Uterus (tissue), 4 donors: ENCODE measurements at regions of chr10 and their contacts with region 1.

Region 1: GRCh38 chr10:116688241-116688711 is 54.1 kb downstream of the HSPA12A start:
- DNase-seq: peak; percentile 42 to 46
- H3K4me3 ChIP-seq: no peak overlapping the region
- H3K27ac ChIP-seq: peak overlapping the region; percentile 51 to 58
- H3K4me1 ChIP-seq: peaks cover 3 to 14% of the 10 kb centered on the region in 2 donors
- H3K27me3 ChIP-seq: no peaks in the 10 kb centered on the region
- CTCF ChIP-seq: no peak
- POLR2A ChIP-seq: no peak

Region 2: GRCh38 chr10:116444527-116445142 is 243.6 kb before region 1 on chr10:
- intact Hi-C with region 1: no loop called
- DNase-seq: no peak
- H3K4me3 ChIP-seq: no peak overlapping the region
- H3K27ac ChIP-seq: no peak overlapping the region
- H3K4me1 ChIP-seq: no peaks in the 10 kb centered on the region
- H3K27me3 ChIP-seq: no peaks in the 10 kb centered on the region
- CTCF ChIP-seq: peak in 3 of 4 experiments; percentile 14 to 35 (median 34)
- POLR2A ChIP-seq: no peak

Region 3: GRCh38 chr10:116787893-116788665 is 99.8 kb after region 1 on chr10:
- intact Hi-C with region 1: loop called (anchors 5 kb)
- DNase-seq: peak; percentile 84 to 86
- H3K4me3 ChIP-seq: no peak overlapping the region
- H3K27ac ChIP-seq: no peak overlapping the region
- H3K4me1 ChIP-seq: no peaks in the 10 kb centered on the region
- H3K27me3 ChIP-seq: peaks cover 0 to 4% of the 10 kb centered on the region in 2 donors
- CTCF ChIP-seq: peak; percentile 95 to 99 (median 98)
- POLR2A ChIP-seq: no peak

Region 4: DNA sequence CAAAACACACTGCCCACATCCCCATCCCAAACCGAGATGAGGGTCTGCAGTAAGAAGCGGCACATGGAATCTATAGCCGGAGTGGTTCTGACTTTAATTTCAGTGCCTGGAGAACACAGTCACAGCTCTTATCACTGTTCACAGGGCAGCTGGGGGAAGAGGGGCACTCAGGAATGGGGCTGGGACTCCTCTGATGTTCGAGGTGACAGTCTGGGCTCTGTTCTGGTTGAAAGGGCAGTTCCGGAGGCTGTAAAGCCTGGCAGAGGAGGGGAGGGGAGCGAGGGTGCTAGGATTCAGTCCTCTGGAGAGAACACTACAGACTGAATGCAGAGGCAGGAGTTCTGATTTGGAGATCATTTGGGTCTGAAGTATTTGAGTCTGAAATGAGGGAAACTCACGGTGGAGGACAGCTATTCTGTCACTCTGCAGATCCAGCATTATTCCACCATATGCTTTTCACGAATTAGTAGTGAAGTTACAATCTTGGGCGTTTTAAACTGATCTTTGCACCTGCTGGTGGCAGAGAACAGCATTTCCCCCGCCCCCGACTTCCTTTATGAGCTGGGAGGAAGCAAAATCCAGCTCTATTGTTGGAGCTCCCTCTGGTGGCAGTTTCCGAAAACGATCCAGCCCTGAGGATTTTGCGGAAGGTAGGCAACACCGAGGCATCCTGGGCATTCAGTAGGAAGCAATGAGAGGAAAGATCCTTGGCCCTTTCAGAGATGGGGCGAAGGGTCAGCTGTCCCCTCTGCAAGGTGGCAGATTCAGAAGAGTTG is 486.4 kb after region 1 on chr10:
- intact Hi-C with region 1: loop called (anchors 10 kb)
- DNase-seq: peak; percentile 57 to 66
- H3K4me3 ChIP-seq: peak overlapping the region; percentile 26 to 38
- H3K27ac ChIP-seq: no peak overlapping the region
- H3K4me1 ChIP-seq: no peaks in the 10 kb centered on the region
- H3K27me3 ChIP-seq: peaks cover 0 to 27% of the 10 kb centered on the region in 2 donors
- CTCF ChIP-seq: peak; percentile 63 to 78 (median 72)
- POLR2A ChIP-seq: no peak